Activated CD4-positive, alpha-beta memory T cell treated with anti-CD3 and anti-CD28 coated beads for 36 hours (primary cell): ENCODE measurements at regions of chr11 and their contacts with region 1.

Region 1: DNA sequence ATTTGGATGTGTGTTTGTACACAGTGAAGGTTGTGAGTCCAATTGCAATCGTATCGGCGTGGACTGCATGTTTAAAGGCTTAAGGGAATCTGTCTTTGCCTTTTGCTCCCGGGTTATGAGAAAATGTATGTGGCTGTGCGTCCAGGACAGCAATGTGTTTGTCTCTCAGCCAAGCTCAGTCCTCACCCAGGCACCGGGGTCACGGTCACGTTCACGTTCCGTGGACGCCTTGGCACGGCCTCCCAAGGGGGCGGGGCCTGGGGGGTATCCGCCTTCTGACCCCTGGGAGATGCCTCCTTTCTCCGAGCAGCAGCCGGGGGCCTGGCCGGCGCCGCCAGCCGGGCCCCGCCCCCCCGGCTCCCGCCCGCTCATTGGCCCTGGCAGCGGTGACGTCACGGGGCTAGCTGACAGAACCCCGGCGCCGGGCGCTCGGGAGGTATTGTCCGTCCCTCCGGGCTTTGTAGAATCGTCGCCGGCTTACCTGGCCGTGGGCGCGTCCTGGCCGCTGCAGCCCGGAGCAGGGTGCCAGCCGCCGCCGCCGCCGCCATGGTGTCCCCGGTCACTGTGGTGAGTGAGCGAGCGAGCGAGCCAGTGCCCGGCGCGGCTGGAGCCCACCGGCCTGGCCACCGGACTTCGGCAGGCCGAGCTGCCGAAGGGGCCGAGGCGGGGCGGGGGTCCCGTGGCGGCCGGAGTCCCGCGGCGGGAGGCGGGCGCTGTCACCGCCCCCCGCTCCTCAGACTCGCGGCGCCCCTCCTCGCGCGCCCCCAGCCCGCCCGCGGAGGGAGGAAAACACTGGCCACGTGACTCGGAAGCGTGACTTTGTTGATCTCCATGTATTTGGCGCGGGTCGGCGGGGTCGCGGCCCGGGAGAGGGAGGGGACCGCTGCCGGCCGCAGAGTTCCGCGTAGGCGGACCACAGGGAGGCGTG is at the start of gene TMEM86A:
- DNase-seq: peak; percentile 93
- H3K4me3 Mint-ChIP-seq: peak within 1 kb of the TSS; percentile 75
- H3K27ac Mint-ChIP-seq: peak within 1 kb of the TSS; percentile 18
- H3K4me1 Mint-ChIP-seq: peaks cover 14% of the 10 kb centered on the region
- H3K27me3 Mint-ChIP-seq: no peaks in the 10 kb centered on the region
- total RNA-seq, gene TMEM86A: 0.50 to 0.65 TPM

Region 2: DNA sequence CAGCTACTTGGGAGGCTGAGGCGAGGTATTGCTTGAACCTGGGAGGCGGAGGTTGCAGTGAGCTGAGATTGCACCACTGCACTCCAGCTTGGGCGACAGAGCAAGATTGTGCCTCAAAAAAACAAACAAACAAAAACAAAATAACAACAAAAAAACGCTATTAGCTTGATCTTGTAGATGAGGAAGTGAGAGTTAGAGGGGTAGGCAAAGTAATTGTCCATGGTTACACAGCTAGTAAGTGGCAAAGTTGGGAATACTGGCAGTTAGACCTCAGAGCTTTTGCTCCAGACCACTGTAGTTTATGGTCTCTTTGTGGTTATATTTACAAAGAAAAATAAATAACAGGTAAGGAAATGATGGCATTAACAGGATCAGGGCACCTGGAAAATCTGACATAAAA is 271.4 kb before region 1 on chr11:
- CTCF ChIA-PET with region 1: no interaction called
- POLR2A ChIA-PET with region 1: no interaction called
- intact Hi-C with region 1: no loop called
- DNase-seq: no peak
- H3K4me3 Mint-ChIP-seq: no peak overlapping the region
- H3K27ac Mint-ChIP-seq: no peak overlapping the region
- H3K4me1 Mint-ChIP-seq: peaks cover 4% of the 10 kb centered on the region
- H3K27me3 Mint-ChIP-seq: no peaks in the 10 kb centered on the region

Region 3: GRCh38 chr11:18669220-18669598 is 29.4 kb before region 1 on chr11:
- CTCF ChIA-PET with region 1: no interaction called
- POLR2A ChIA-PET with region 1: no interaction called
- intact Hi-C with region 1: loop called (anchors 2 kb)
- DNase-seq: peak; percentile 51
- H3K4me3 Mint-ChIP-seq: peak overlapping the region; percentile 9
- H3K27ac Mint-ChIP-seq: peak overlapping the region; percentile 46
- H3K4me1 Mint-ChIP-seq: peaks cover 54% of the 10 kb centered on the region
- H3K27me3 Mint-ChIP-seq: no peaks in the 10 kb centered on the region

Region 4: DNA sequence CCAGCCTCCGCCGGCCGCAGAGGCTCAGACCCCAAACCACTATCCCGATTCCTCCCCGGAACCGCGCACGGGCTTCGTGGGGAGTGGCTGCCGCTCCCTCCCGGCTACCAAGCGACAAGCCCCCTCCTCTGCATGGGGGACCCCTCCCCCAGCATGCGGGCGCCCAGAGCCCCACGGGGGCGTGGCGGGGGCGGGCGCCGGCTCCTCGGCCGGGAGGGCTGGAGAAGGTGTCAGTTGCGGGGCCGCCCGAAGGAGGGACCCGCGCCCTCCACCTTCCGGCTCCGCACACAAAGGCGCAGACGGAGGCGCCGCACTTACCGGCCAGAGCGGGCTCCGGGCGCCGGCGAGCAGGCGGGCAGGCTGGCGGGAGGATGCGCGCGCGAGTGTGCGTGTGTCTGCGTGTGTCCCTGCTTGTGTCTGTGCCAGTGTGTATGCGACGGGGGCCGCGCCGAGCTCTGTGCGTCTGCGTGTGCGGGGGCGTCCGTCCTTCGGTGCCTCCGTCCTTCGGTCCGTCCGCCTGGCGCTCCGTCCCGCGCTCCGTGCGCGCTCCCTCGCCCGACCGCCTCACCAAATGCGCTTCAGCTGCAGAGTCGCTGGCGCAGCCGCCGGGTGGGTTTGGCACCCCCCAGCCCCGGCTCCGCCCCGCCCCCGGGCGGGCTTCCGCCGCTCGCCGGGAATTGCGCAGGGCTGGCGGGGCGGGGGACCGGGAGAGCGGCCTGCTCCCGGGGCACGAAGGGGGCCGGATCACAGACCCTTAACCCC is 92.8 kb after region 1 on chr11 and contains the start of gene PTPN5:
- CTCF ChIA-PET with region 1: no interaction called
- POLR2A ChIA-PET with region 1: no interaction called
- intact Hi-C with region 1: no loop called
- DNase-seq: no peak
- H3K4me3 Mint-ChIP-seq: no peak within 1 kb of the TSS
- H3K27ac Mint-ChIP-seq: no peak within 1 kb of the TSS
- H3K4me1 Mint-ChIP-seq: peaks cover 3% of the 10 kb centered on the region
- H3K27me3 Mint-ChIP-seq: peaks cover 39% of the 10 kb centered on the region
- total RNA-seq, gene PTPN5: not detected